WTC11 (cell line): ENCODE measurements at regions of chr16 and their contacts with region 1.

Region 1: DNA sequence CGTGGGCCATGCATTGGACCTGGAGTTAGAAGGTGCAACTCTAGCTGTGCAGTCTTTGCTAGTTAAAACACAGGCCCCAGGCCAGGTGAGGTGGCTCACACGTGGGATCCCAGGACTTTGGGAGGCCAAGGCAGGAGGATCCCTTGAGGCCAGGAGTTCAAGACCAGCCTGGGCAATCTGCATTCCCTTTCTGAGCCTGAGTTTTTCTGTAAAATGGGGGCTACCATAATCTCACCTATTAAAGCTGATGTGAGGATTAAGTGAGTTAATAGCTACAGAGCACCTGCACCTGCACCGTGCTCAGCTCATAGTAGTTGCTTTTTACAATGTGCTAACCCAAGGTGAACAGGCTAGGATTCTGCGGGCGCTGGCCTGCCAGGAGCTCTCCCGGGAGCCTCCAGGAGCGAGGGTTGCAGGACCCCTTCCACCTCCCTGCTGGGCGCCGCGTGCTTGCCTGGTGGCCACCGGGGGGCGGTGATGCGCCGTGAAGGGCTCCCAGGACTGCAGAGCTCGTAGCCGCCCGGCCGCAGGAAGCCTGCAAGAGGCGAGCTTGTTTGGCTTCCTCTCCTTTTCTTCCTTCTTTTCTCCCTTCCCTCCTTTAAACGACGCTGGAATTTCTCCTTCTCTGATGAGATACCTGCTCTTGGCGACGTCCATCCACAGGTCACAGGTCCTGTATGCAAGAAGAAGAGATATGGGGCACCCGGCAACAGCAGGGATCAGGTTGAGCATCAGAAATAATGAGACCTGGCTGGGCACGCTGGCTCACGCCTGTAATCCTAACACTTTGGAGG is 51.3 kb downstream of the ZFP90 start:
- DNase-seq: peak; percentile 94
- ATAC-seq: peak; percentile 99
- H3K4me3 Mint-ChIP-seq: peak overlapping the region; percentile 34; the same call in 1 of the 2 replicates
- H3K27ac Mint-ChIP-seq: peak overlapping the region; percentile 71; the same call in 1 of the 2 replicates
- H3K4me1 Mint-ChIP-seq: peaks cover 11% of the 10 kb centered on the region
- H3K27me3 Mint-ChIP-seq: peaks cover 3% of the 10 kb centered on the region
- CTCF ChIP-seq: peak; percentile 81

Region 2: GRCh38 chr16:68387301-68387700 is 203.1 kb before region 1 on chr16:
- CTCF ChIA-PET with region 1: no interaction called
- POLR2A ChIA-PET with region 1: no interaction called
- DNase-seq: peak; percentile 76
- ATAC-seq: peak; percentile 88
- H3K4me3 Mint-ChIP-seq: no peak overlapping the region
- H3K27ac Mint-ChIP-seq: no peak overlapping the region
- H3K4me1 Mint-ChIP-seq: peaks cover 55% of the 10 kb centered on the region
- H3K27me3 Mint-ChIP-seq: no peaks in the 10 kb centered on the region
- CTCF ChIP-seq: no peak

Region 3: DNA sequence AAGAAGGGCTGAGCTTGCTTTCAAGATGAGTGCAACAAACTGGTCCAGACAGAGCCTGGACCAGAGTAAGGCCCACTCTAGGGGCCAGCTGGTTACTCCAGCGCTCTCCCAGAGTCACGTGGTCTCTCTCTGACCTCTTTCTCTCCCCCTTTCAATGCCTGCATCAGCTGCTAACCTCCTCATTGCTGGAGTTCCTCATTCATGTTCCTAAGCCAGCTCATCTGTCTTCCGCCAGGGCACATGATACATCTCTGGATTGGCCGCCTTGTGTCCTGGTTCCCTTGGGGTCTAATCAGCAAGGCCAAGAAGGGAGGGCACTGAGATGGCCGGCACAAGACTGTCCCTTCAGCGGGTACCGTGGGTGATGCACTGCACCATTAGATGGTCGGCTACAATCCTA is 78.2 kb before region 1 on chr16:
- CTCF ChIA-PET with region 1: interaction called, 10 read pairs
- POLR2A ChIA-PET with region 1: no interaction called
- DNase-seq: no peak
- ATAC-seq: no peak
- H3K4me3 Mint-ChIP-seq: no peak overlapping the region
- H3K27ac Mint-ChIP-seq: no peak overlapping the region
- H3K4me1 Mint-ChIP-seq: 0 out of 2 replicates have a peak, but pooled peaks cover 3% of the 10 kb centered on the region
- H3K27me3 Mint-ChIP-seq: peaks cover 15% of the 10 kb centered on the region
- CTCF ChIP-seq: no peak

Region 4: GRCh38 chr16:68538880-68539701 is 51.3 kb before region 1 on chr16 and contains the start of gene ZFP90:
- CTCF ChIA-PET with region 1: interaction called, 11 read pairs
- POLR2A ChIA-PET with region 1: no interaction called
- DNase-seq: peak; percentile 93
- ATAC-seq: peak; percentile 95
- H3K4me3 Mint-ChIP-seq: peak within 1 kb of the TSS; percentile 91
- H3K27ac Mint-ChIP-seq: peak within 1 kb of the TSS; percentile 97
- H3K4me1 Mint-ChIP-seq: peaks cover 12% of the 10 kb centered on the region
- H3K27me3 Mint-ChIP-seq: no peaks in the 10 kb centered on the region; the same call in 1 of the 2 replicates
- CTCF ChIP-seq: no peak
- total RNA-seq, gene ZFP90: 21.7 to 24.9 TPM (median 22.6 TPM) in 3 replicates

Region 5: GRCh38 chr16:68644715-68645493 is 54.5 kb after region 1 on chr16 and contains the start of gene CDH3:
- CTCF ChIA-PET with region 1: interaction called, 61 read pairs
- POLR2A ChIA-PET with region 1: interaction called, 4 read pairs
- DNase-seq: peak; percentile 94
- ATAC-seq: peak; percentile 76
- H3K4me3 Mint-ChIP-seq: peak within 1 kb of the TSS; percentile 89
- H3K27ac Mint-ChIP-seq: peak within 1 kb of the TSS; percentile 96
- H3K4me1 Mint-ChIP-seq: peaks cover 48% of the 10 kb centered on the region
- H3K27me3 Mint-ChIP-seq: peaks cover 25% of the 10 kb centered on the region
- CTCF ChIP-seq: no peak
- total RNA-seq, gene CDH3: 128 to 142 TPM (median 136 TPM) in 3 replicates

Region 6: DNA sequence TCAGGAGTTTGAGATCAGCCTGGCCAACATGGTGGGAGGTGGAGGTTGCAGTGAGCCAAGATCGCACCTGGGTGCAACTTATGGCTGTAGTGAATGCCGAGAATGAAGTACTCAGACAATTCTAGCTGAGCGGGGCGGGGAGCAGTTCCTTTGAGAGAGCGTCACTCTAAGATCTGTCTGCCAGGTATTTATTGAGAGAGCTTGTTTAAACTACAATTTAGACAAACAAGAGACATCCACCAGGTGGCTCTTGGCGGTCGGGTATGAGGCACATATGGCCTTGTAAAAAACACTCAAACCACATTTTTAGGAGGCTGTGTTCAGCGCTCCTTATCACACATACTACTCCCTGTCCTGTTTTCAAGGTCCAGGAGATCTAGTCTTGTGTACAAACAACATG is 106.1 kb after region 1 on chr16:
- CTCF ChIA-PET with region 1: interaction called, 18 read pairs
- POLR2A ChIA-PET with region 1: no interaction called
- DNase-seq: no peak
- ATAC-seq: no peak
- H3K4me3 Mint-ChIP-seq: no peak overlapping the region
- H3K27ac Mint-ChIP-seq: peak overlapping the region; percentile 85; the same call in 1 of the 2 replicates
- H3K4me1 Mint-ChIP-seq: no peaks in the 10 kb centered on the region
- H3K27me3 Mint-ChIP-seq: no peaks in the 10 kb centered on the region
- CTCF ChIP-seq: no peak

Region 7: GRCh38 chr16:68800257-68800875 is 210.0 kb after region 1 on chr16:
- CTCF ChIA-PET with region 1: interaction called, 11 read pairs
- POLR2A ChIA-PET with region 1: no interaction called
- DNase-seq: peak; percentile 79
- ATAC-seq: peak; percentile 95
- H3K4me3 Mint-ChIP-seq: no peak overlapping the region
- H3K27ac Mint-ChIP-seq: 0 out of 2 replicates have a peak overlapping the region, but pooled peaks have one; percentile 11
- H3K4me1 Mint-ChIP-seq: peaks cover 35% of the 10 kb centered on the region
- H3K27me3 Mint-ChIP-seq: no peaks in the 10 kb centered on the region
- CTCF ChIP-seq: peak; percentile 46; the same call in 1 of the 2 replicates